Right cardiac atrium (tissue), 5 donors: ENCODE measurements at regions of chr15 and their contacts with region 1.

Region 1: DNA sequence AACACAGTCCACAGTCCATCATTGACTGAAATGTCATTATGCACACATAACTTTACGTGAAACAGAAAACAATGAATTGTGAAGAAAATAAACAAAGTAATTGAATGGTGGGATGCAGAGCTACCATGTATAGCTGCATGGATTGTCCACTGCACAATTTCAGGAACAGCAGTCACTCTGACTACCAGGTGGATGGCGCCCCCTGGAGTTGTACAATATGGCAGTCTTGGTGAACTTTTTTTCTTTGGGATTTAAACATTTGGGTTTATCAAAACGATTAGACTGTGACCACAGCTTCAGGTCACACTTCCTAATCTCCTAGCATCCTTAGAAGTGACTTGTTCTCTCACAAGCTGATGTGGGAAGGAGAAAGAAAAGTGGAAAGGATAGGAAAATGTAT is 48.9 kb upstream of the TCF12 start:
- DNase-seq: peak; percentile 46 to 71 (median 57)
- ATAC-seq: peak in 1 of 2 donors; percentile 51
- H3K4me3 ChIP-seq: no peak overlapping the region
- H3K27ac ChIP-seq: no peak overlapping the region
- H3K4me1 ChIP-seq: peaks cover 1% of the 10 kb centered on the region
- H3K27me3 ChIP-seq: no peaks in the 10 kb centered on the region

Region 2: GRCh38 chr15:56496635-56497034 is 372.9 kb before region 1 on chr15:
- intact Hi-C with region 1: loop called (anchors 5 kb)
- DNase-seq: no peak
- ATAC-seq: peak; percentile 82 to 87
- H3K4me3 ChIP-seq: no peak overlapping the region
- H3K27ac ChIP-seq: no peak overlapping the region
- H3K4me1 ChIP-seq: no peaks in the 10 kb centered on the region
- H3K27me3 ChIP-seq: no peaks in the 10 kb centered on the region

Region 3: GRCh38 chr15:56798639-56799038 is 70.9 kb before region 1 on chr15:
- intact Hi-C with region 1: no loop called
- DNase-seq: no peak
- ATAC-seq: no peak
- H3K4me3 ChIP-seq: no peak overlapping the region
- H3K27ac ChIP-seq: no peak overlapping the region
- H3K4me1 ChIP-seq: no peaks in the 10 kb centered on the region
- H3K27me3 ChIP-seq: no peaks in the 10 kb centered on the region